ENCODE measurements at regions of chr19 and their contacts with region 1.

Region 1: DNA sequence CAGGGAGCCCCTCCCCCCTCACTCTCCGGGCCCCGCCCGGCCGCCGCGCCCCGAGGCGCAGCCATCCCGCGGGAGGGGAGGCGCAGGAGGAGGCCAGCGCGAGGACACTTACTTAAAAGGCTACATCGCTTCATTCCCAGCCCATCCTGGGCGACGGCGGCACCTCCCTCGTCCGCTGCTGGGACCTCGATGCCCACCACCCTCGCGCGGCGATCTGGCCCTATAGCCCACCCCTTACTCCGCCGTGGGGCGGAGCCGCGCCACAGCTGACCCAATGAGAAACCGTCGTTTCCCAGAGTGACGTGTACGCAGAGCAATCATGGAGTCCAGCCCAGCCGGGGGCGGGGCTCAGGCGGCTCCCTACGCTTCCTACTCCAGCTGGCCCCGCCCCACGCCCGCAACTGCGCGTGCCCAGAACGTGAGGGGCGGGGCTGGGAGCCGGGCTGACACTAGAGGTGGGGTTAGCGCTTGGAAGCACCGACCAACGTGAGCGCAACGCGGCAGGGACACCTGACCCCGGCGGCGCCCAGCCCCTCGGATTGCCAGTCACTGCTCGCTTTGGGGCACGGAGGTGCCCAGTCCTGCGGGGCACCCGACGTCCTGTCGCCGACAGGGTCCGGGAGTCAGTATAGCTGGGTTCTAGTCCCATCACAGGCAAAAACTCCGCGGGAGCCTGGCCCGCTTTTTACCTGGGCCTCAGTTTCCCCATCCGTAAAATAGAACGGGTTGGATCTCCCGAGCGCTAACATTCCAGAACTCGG is at the start of gene ANKRD27:
- DNase-seq: peak; percentile 95 to 99 (median 98)
- ATAC-seq: peak; percentile 92 to 93
- H3K4me3 Mint-ChIP-seq: peak within 1 kb of the TSS; percentile 90 to 97 (median 96)
- H3K27ac Mint-ChIP-seq: peak within 1 kb of the TSS; percentile 53 to 94 (median 86)
- H3K4me1 Mint-ChIP-seq: peaks cover 14 to 46% (median 39%) of the 10 kb centered on the region in 4 donors
- H3K27me3 Mint-ChIP-seq: peaks cover 6 to 14% (median 9%) of the 10 kb centered on the region in 5 donors
- polyA plus RNA-seq, gene ANKRD27: 9.0 to 17.1 (median 12.1) TPM

Region 2: GRCh38 chr19:32642771-32643170 is 32.4 kb before region 1 on chr19:
- POLR2A ChIA-PET with region 1: interaction called, 11 read pairs
- DNase-seq: peak; percentile 19 to 84 (median 68)
- ATAC-seq: peak; percentile 98 to 99
- H3K4me3 Mint-ChIP-seq: peak overlapping the region; percentile 40 to 85 (median 71)
- H3K27ac Mint-ChIP-seq: peak overlapping the region; percentile 51 to 91 (median 85)
- H3K4me1 Mint-ChIP-seq: peaks cover 16 to 47% (median 37%) of the 10 kb centered on the region in 4 donors
- H3K27me3 Mint-ChIP-seq: no peaks in the 10 kb centered on the region

Region 3: DNA sequence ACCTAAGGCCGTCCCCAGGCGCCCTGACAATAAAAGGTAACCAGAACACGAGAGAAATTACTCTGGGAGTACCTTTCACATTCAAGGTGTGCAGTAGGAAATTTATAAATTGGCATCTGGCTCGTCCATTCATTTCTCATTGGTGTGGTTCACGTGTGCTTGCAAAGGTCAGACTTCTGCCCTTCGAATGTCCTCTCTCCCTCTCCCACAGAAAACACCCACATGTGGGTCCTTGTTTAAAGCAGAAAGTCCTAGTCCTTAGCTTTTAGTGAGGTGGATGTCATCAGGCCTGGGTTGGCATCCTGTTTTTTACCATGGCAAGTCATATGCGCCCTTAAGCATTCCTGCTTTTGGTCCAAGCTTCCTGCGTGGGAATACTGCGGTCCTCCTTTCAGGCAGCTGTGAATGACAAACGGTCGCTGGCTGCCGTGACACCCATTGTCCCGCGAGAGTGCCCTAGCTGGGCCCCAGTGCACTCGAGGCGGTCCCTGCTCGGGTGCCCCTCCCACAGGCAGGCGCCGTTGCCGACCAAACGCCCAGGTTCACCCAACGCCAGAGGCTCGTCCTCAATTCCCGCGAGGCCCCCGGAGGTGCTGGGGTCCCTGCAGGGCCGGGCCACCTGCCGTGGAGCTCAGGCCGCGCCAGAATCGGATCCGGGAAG is 16.3 kb after region 1 on chr19 and contains the start of gene NUDT19:
- POLR2A ChIA-PET with region 1: interaction called, 41 read pairs
- DNase-seq: peak; percentile 56 to 87 (median 66)
- ATAC-seq: peak; percentile 78 to 79
- H3K4me3 Mint-ChIP-seq: peak within 1 kb of the TSS; percentile 89 to 97 (median 96)
- H3K27ac Mint-ChIP-seq: peak within 1 kb of the TSS; percentile 92 to 98 (median 96)
- H3K4me1 Mint-ChIP-seq: peaks cover 33 to 60% (median 51%) of the 10 kb centered on the region in 4 donors
- H3K27me3 Mint-ChIP-seq: no peaks in the 10 kb centered on the region
- polyA plus RNA-seq, gene NUDT19: 2.5 to 2.7 (median 2.5) TPM

Measured in naive thymus-derived CD8-positive, alpha-beta T cell (primary cell).